ENCODE measurements at regions of chr13 and their contacts with region 1.

Region 1: DNA sequence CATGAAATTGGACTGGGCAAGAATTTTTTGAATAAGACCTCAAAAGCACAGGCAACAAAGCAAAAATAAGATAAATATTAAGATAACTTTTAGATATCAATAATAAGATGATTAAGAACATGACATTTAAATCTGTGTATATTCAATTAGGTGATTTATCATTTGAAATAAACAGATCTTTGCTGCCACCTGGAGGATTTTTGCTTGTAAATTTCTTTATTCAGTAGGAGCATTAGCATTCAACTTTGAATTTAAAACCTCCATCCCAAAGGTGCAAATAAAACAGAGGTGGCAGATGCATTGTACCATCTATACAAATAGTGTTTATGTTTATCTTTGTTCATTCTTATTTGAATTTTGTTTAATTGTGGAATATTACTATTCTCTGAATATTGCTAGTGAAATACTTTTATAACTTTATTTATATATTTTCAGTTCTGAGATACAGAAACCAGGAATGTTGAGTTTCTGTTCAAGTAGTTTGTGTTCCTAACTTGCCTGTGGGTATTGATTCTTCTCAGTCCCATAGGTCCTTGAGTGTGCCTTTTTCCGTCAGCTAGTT is 20.9 kb downstream of the COG6 start:
- DNase-seq: peak; percentile 67
- ATAC-seq: no peak
- H3K4me3 ChIP-seq: no peak overlapping the region
- H3K27ac ChIP-seq: no peak overlapping the region
- H3K4me1 ChIP-seq: no peaks in the 10 kb centered on the region
- H3K27me3 ChIP-seq: no peaks in the 10 kb centered on the region
- CTCF ChIP-seq: peak; percentile 58

Region 2: GRCh38 chr13:39051157-39051556 is 625.2 kb before region 1 on chr13:
- CTCF ChIA-PET with region 1: no interaction called
- POLR2A ChIA-PET with region 1: no interaction called
- intact Hi-C with region 1: loop called (anchors 1 kb)
- DNase-seq: peak; percentile 52
- ATAC-seq: no peak
- H3K4me3 ChIP-seq: no peak overlapping the region
- H3K27ac ChIP-seq: no peak overlapping the region
- H3K4me1 ChIP-seq: no peaks in the 10 kb centered on the region
- H3K27me3 ChIP-seq: no peaks in the 10 kb centered on the region
- CTCF ChIP-seq: peak; percentile 61

Region 3: GRCh38 chr13:39401046-39401705 is 275.2 kb before region 1 on chr13:
- CTCF ChIA-PET with region 1: no interaction called
- POLR2A ChIA-PET with region 1: no interaction called
- intact Hi-C with region 1: no loop called
- DNase-seq: no peak
- ATAC-seq: no peak
- H3K4me3 ChIP-seq: no peak overlapping the region
- H3K27ac ChIP-seq: no peak overlapping the region
- H3K4me1 ChIP-seq: no peaks in the 10 kb centered on the region
- H3K27me3 ChIP-seq: no peaks in the 10 kb centered on the region
- CTCF ChIP-seq: no peak

Measured in PC-3 (cell line).